HepG2 (cell line): ENCODE measurements at regions of chr3 and their contacts with region 1.

Region 1: GRCh38 chr3:187227658-187228258 is 30.5 kb downstream of the RTP1 start:
- DNase-seq: no peak
- ATAC-seq: peak; percentile 16; the same call in 2 of the 3 replicates
- H3K4me3 ChIP-seq: no peak overlapping the region
- H3K27ac ChIP-seq: no peak overlapping the region
- H3K4me1 ChIP-seq: peaks cover 11% of the 10 kb centered on the region
- H3K27me3 ChIP-seq: no peaks in the 10 kb centered on the region
- CTCF ChIP-seq: no peak
- EP300 ChIP-seq: no peak
- POLR2A ChIP-seq: no peak
- RAD21 ChIP-seq: no peak

Region 2: GRCh38 chr3:187291001-187291511 is 63.3 kb after region 1 on chr3:
- CTCF ChIA-PET with region 1: no interaction called
- POLR2A ChIA-PET with region 1: interaction called, 6 read pairs
- in situ Hi-C with region 1: loop called (anchors 5 kb)
- intact Hi-C with region 1: loop called (anchors 5 kb)
- DNase-seq: no peak
- ATAC-seq: peak; percentile 62
- H3K4me3 ChIP-seq: peak overlapping the region; percentile 10 to 66 (median 25); a peak in 3 of 6 replicates
- H3K27ac ChIP-seq: peak overlapping the region; percentile 70
- H3K4me1 ChIP-seq: peaks cover 34% of the 10 kb centered on the region
- H3K27me3 ChIP-seq: peaks cover 2 to 7% of the 10 kb centered on the region in 2 experiments; a peak in 3 of 5 replicates
- CTCF ChIP-seq: peak; percentile 10; the same call in 1 of the 2 replicates
- EP300 ChIP-seq: no peak
- POLR2A ChIP-seq: no peak
- RAD21 ChIP-seq: no peak